GM23248 (cell line): ENCODE measurements at regions of chr18 and their contacts with region 1.

Region 1: GRCh38 chr18:21557607-21558253 is 42.8 kb downstream of the ESCO1 start:
- DNase-seq: no peak
- H3K4me3 ChIP-seq: no peak overlapping the region
- H3K27ac ChIP-seq: no peak overlapping the region
- H3K4me1 ChIP-seq: no peaks in the 10 kb centered on the region
- H3K27me3 ChIP-seq: no peaks in the 10 kb centered on the region

Region 2: GRCh38 chr18:21499997-21500396 is 57.7 kb before region 1 on chr18:
- in situ Hi-C with region 1: loop called (anchors 5 kb)
- DNase-seq: no peak
- H3K4me3 ChIP-seq: no peak overlapping the region
- H3K27ac ChIP-seq: no peak overlapping the region
- H3K4me1 ChIP-seq: no peaks in the 10 kb centered on the region
- H3K27me3 ChIP-seq: no peaks in the 10 kb centered on the region